ENCODE measurements at regions of chr4 and their contacts with region 1.

Region 1: GRCh38 chr4:118734491-118735205 is 49.5 kb downstream of the METTL14 start:
- DNase-seq: no peak
- ATAC-seq: no peak
- H3K4me3 ChIP-seq: no peak overlapping the region
- H3K27ac ChIP-seq: no peak overlapping the region
- H3K4me1 ChIP-seq: peaks cover 0 to 6% (median 0%) of the 10 kb centered on the region in 9 donors
- H3K27me3 ChIP-seq: no peaks in the 10 kb centered on the region
- CTCF ChIP-seq: no peak

Region 2: DNA sequence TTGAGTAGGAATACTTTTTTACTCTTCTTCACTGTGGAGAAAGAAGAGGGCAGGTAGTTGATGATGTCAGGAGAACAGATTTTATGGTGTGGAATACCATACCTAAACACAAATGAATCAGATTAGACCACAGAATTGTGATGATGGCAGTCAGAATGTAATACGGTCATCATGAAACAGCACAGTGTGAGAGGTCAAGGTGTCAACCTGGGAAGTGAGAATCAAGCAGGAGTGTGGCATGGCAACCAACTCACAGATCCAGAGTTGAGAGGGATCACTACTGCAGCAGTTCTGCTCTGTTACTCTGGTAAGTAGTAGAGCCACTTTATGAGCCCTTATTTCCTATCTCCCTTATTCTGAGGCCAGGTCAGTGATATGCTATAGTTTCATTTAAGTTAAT is 21.8 kb before region 1 on chr4:
- intact Hi-C with region 1: loop called in 1 of 10 experiments (anchors 2 kb)
- DNase-seq: no peak
- ATAC-seq: no peak
- H3K4me3 ChIP-seq: no peak overlapping the region
- H3K27ac ChIP-seq: no peak overlapping the region
- H3K4me1 ChIP-seq: no peaks in the 10 kb centered on the region
- H3K27me3 ChIP-seq: no peaks in the 10 kb centered on the region
- CTCF ChIP-seq: no peak

Measured in heart right ventricle (tissue), 16 donors.